SK-N-SH (cell line): ENCODE measurements at regions of chr17 and their contacts with region 1.

Region 1: DNA sequence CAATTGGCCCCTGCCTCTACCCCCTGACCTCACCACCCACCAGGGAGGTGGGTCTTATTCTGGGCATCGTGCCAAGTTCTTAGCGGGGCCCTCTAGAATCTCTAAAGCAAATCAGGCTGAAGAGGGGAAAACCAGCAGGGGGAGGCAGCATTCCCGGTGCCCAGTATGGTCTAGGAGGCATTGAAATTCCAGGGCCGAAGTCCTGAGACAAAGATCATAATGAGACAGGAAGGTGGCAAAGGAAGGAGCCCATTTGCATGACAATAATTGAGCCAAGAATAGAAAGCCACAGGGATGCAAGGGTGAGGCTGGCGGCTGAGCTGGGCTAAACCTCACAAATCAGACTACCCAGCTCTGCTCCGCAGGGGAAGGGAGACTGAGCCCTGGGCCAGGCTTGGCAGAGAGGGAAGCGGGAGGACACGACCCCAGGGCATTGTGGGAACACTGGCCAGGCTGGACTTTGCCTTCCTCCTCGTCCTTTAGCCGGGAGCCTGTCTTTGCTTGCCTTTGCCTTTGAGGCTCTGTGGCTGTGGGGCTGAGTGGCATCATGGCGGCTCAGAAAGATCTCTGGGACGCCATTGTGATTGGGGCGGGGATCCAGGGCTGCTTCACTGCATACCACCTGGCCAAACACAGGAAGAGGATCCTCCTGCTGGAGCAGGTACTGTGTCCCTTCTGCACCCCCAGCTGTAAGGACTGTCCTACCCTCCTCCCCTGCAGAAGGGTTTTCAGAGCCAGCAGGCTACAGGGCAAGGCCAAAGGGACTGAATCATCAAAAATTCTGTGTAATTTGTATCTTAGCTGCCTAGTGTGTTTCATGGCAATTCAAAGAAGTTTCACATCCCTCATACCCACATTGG is at the start of gene PIPOX:
- DNase-seq: peak; percentile 76
- H3K4me3 ChIP-seq: no peak within 1 kb of the TSS
- H3K27ac ChIP-seq: peak within 1 kb of the TSS in 1 of 2 experiments; percentile 58; a peak in 2 of 4 replicates
- H3K4me1 ChIP-seq: peaks cover 43 to 49% of the 10 kb centered on the region in 2 experiments; a peak in 3 of 4 replicates
- H3K27me3 ChIP-seq: 0 out of 2 replicates have a peak, but pooled peaks cover under 1% of the 10 kb centered on the region
- CTCF ChIP-seq: peak; percentile 32; the same call in 1 of the 2 replicates
- EP300 ChIP-seq: no peak
- RAD21 ChIP-seq: peak; percentile 59
- polyA plus RNA-seq, gene PIPOX: 0.31 and 0.55 TPM in 2 replicates

Region 2: GRCh38 chr17:28982131-28982951 is 60.6 kb before region 1 on chr17:
- CTCF ChIA-PET with region 1: no interaction called
- POLR2A ChIA-PET with region 1: no interaction called
- DNase-seq: no peak
- H3K4me3 ChIP-seq: no peak overlapping the region
- H3K27ac ChIP-seq: no peak overlapping the region
- H3K4me1 ChIP-seq: peaks cover 12 to 25% of the 10 kb centered on the region in 2 experiments; a peak in 2 of 4 replicates
- H3K27me3 ChIP-seq: peaks cover 4% of the 10 kb centered on the region; the same call in 1 of the 2 replicates
- CTCF ChIP-seq: no peak
- EP300 ChIP-seq: no peak
- RAD21 ChIP-seq: no peak

Region 3: DNA sequence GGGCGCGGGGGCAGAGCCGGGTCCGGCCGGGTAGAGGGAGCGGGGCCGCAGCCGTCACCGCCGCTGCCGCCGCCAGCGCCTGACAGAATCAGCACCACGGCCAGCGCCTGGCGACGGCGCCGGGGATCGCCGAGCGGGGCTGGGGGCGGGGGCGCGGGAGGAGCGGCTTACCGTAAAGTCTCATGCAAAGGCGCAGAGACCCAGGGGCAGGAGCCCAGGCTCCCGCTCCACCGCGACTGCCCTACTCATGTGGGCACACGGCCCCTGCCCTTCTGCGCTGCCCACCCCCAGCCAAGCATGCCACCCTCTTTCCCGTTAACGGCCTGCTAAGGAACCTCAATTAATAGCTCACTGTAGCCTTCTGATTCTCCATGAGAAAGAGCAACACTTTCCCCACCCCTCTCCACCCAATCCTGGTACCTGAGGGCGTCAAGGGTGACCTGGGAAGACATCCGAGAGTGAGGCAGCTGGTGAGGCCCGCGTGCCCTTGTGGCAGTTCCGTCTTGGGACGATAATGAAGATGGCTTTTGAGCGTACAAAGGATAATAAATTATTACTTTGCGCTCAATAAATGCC is 36.9 kb before region 1 on chr17 and contains the start of gene SEZ6:
- CTCF ChIA-PET with region 1: interaction called, 16 read pairs
- POLR2A ChIA-PET with region 1: interaction called, 3 read pairs
- DNase-seq: peak; percentile 94
- H3K4me3 ChIP-seq: peak within 1 kb of the TSS in 1 of 2 experiments; percentile 43; a peak in 3 of 4 replicates
- H3K27ac ChIP-seq: peak within 1 kb of the TSS in 1 of 2 experiments; percentile 28; a peak in 1 of 4 replicates
- H3K4me1 ChIP-seq: peaks cover 7 to 27% of the 10 kb centered on the region in 2 experiments; a peak in 2 of 4 replicates
- H3K27me3 ChIP-seq: peaks cover 35% of the 10 kb centered on the region
- CTCF ChIP-seq: no peak
- EP300 ChIP-seq: peak; percentile 9 to 25; a peak in 1 of 4 replicates
- RAD21 ChIP-seq: no peak
- polyA plus RNA-seq, gene SEZ6: 0.12 and 0.37 TPM in 2 replicates

Region 4: DNA sequence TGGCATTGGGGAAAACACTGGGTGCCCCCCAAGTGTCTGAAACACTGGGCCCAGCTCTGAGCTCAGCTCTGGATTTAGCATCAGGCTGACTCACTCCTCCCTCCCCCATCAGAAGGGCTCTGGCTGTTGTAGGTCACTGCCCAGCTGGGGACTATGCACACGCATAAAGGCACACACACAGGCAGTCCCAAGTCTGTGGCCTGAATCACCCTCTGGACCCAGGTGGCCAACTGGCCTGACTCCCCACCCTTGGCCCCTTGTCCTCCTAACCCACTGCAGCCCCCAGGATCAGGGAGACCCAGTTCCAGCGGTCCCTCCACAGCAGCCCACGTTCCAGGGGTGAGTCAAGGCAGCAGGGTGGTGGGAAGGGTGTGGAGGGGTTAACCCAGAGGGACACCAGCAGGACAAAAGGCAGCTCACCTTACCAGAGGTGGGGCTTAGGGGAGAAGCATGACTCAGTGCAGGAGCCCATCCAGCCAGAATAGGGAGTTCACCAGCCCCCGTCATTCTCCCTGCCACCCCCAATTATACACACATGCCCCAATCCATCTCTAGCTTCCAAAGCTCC is 90.3 kb after region 1 on chr17:
- CTCF ChIA-PET with region 1: no interaction called
- POLR2A ChIA-PET with region 1: no interaction called
- DNase-seq: no peak
- H3K4me3 ChIP-seq: no peak overlapping the region
- H3K27ac ChIP-seq: peak overlapping the region; percentile 50 to 62; a peak in 2 of 4 replicates
- H3K4me1 ChIP-seq: peaks cover 20 to 27% of the 10 kb centered on the region in 2 experiments
- H3K27me3 ChIP-seq: no peaks in the 10 kb centered on the region
- CTCF ChIP-seq: no peak
- EP300 ChIP-seq: no peak
- RAD21 ChIP-seq: no peak